ENCODE measurements at regions of chrX and their contacts with region 1.

Region 1: GRCh38 chrX:12974796-12975669 is at the start of gene TMSB4X:
- DNase-seq: peak; percentile 68
- CTCF ChIP-seq: no peak

Region 2: DNA sequence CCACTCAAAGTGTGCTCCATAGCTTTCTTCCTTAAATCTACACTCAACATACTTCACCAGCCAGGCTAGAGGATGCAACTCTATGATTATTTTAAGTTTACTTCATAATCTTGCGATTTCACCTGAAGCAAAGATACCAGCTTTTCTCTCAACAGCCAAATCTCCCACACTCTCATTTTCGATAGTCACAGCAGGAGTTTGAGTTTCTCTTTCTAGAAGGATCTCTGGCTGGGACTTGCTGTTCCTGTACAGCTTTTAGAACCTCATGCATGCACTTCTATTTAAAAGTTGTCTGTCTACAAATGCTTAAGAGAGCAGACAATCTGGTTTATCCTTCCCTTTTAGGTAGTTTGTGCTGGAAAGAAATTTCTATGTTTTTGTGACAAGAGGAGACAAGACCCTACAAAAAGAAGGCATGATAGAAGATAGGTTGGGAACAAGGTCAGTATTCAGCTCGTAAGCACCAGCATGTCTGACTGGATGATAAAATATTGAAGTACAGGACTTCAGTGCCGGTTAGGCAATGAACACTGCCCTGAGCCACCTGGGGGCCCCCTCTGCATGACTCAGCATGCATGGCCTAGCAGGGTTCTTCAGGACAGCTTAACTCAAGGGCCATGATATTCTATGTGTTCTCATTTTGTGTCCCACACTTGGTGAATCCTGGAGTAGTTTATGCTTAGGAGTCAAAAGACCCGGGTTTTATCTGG is 279.2 kb after region 1 on chrX:
- in situ Hi-C with region 1: loop called (anchors 25 kb)
- DNase-seq: no peak
- CTCF ChIP-seq: peak; percentile 34

Measured in GM13976 (cell line).